ENCODE measurements at regions of chr17 and their contacts with region 1.

Region 1: GRCh38 chr17:82668631-82669099 is 20.4 kb upstream of the WDR45B start:
- DNase-seq: peak; percentile 85
- CTCF ChIP-seq: peak; percentile 73

Region 2: GRCh38 chr17:82592767-82593589 is 75.7 kb before region 1 on chr17:
- in situ Hi-C with region 1: no loop called
- DNase-seq: no peak
- CTCF ChIP-seq: no peak

Region 3: GRCh38 chr17:82751571-82752370 is 83.1 kb after region 1 on chr17 and contains the start of gene TBCD:
- in situ Hi-C with region 1: loop called (anchors 25 kb)
- DNase-seq: peak; percentile 99
- CTCF ChIP-seq: no peak